ENCODE measurements at regions of chr20 and their contacts with region 1.

Region 1: DNA sequence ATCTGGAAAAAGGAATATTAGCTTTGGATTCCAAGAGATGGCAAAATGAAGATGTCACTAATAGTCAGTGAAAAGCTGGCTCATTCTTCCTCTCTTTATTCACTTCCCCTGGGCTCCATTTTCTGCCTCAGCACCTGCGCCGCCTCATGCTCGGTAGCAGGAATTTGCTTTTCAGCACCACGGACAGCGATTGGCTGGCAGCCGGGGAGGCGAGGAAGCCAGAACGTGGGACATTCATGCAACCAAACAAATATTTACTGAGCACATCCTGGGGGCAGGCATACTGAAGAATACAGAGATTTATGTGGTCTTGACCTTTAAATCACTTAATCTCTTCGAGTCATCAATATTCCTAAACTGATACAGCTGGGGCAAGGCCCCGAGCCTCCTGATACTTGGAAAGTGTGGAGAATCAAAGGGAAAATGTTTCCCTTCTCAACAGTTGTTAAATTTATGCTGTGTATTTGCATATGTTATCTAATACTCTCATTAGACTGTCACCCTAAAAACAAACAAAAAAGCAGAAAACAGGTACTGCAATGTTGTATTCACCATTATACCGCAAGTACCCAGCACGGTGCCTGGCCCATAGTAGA is 12.1 kb upstream of the PDYN start:
- DNase-seq: peak; percentile 74
- ATAC-seq: no peak
- H3K4me3 Mint-ChIP-seq: no peak overlapping the region
- H3K27ac Mint-ChIP-seq: no peak overlapping the region
- H3K4me1 Mint-ChIP-seq: no peaks in the 10 kb centered on the region
- H3K27me3 Mint-ChIP-seq: peaks cover 26% of the 10 kb centered on the region
- CTCF ChIP-seq: no peak

Region 2: GRCh38 chr20:1844325-1845162 is 161.4 kb before region 1 on chr20:
- CTCF ChIA-PET with region 1: no interaction called
- POLR2A ChIA-PET with region 1: no interaction called
- intact Hi-C with region 1: no loop called
- DNase-seq: peak; percentile 77
- ATAC-seq: peak; percentile 97
- H3K4me3 Mint-ChIP-seq: no peak overlapping the region
- H3K27ac Mint-ChIP-seq: peak overlapping the region; percentile 1
- H3K4me1 Mint-ChIP-seq: peaks cover 9% of the 10 kb centered on the region
- H3K27me3 Mint-ChIP-seq: peaks cover 4% of the 10 kb centered on the region
- CTCF ChIP-seq: no peak

Region 3: DNA sequence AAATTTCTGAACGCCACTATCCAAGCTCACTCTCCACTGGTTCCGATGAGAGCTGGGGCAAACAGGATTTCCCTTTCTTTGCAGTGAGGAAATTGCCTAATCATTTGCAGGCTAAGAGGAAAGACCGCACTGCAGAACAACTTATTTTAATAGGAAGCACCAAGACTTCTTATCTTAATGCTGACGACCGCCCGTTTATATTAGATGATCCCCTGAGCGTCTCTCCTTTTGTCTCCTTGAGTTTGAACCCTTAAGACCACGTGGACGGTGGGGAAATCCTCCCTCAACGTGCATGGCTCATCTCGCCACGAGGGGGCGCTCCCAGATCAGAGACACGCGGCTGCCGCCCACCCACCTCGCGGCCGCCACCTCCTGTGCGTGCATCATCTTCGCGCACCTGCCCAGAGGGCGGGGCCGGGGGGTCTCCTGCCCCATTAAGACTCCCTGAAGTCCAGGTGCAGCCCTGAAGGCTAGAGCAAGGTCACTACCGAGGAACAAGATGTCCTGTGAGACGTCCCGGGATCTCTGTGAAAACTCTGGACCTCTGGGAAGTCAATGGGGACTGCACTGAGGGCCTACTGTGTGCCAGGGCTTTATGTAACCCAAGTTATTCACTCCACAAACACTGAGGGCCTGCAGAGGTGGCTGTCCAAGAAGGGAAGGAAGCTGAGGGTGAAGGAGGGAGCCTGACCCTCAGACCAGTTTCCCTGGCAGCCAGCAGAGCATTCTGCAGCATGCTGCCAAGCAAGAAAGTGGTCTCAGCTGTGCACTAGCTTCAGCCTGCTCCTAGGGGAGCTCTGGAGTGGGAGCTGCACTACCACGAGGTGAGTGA is 40.2 kb before region 1 on chr20:
- CTCF ChIA-PET with region 1: interaction called, 15 read pairs
- POLR2A ChIA-PET with region 1: no interaction called
- intact Hi-C with region 1: no loop called
- DNase-seq: peak; percentile 91
- ATAC-seq: peak; percentile 92
- H3K4me3 Mint-ChIP-seq: peak overlapping the region; percentile 40
- H3K27ac Mint-ChIP-seq: peak overlapping the region; percentile 35
- H3K4me1 Mint-ChIP-seq: peaks cover 17% of the 10 kb centered on the region
- H3K27me3 Mint-ChIP-seq: peaks cover 32% of the 10 kb centered on the region
- CTCF ChIP-seq: peak; percentile 95

Region 4: GRCh38 chr20:2022163-2022562 is 16.2 kb after region 1 on chr20:
- CTCF ChIA-PET with region 1: interaction called, 14 read pairs
- POLR2A ChIA-PET with region 1: interaction called, 3 read pairs
- intact Hi-C with region 1: no loop called
- DNase-seq: no peak
- ATAC-seq: no peak
- H3K4me3 Mint-ChIP-seq: no peak overlapping the region
- H3K27ac Mint-ChIP-seq: no peak overlapping the region
- H3K4me1 Mint-ChIP-seq: no peaks in the 10 kb centered on the region
- H3K27me3 Mint-ChIP-seq: peaks cover 23% of the 10 kb centered on the region
- CTCF ChIP-seq: no peak

Region 5: DNA sequence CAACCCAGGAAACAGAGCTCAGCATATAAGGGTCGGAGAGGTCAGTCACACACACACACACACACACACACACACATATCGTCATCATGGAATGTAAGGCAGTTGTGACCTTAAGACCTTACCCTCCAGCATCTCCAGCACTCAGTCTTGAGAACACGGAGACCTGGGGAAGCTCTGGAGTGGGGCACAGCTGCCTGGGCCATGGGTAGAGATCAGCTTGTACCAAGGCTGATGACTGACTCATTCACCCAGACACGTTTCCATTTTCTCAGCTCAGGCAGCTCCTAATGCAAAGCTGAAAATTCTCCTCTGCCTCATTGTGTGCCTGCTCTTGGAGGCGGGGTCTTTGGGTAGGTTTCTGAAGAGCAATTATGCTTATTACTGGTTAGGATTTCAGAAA is 26.2 kb after region 1 on chr20:
- CTCF ChIA-PET with region 1: interaction called, 20 read pairs
- POLR2A ChIA-PET with region 1: no interaction called
- intact Hi-C with region 1: no loop called
- DNase-seq: no peak
- ATAC-seq: no peak
- H3K4me3 Mint-ChIP-seq: no peak overlapping the region
- H3K27ac Mint-ChIP-seq: no peak overlapping the region
- H3K4me1 Mint-ChIP-seq: no peaks in the 10 kb centered on the region
- H3K27me3 Mint-ChIP-seq: peaks cover 41% of the 10 kb centered on the region
- CTCF ChIP-seq: no peak

Region 6: GRCh38 chr20:2093159-2093781 is 87.3 kb after region 1 on chr20:
- CTCF ChIA-PET with region 1: interaction called, 20 read pairs
- POLR2A ChIA-PET with region 1: no interaction called
- intact Hi-C with region 1: no loop called
- DNase-seq: peak; percentile 63
- ATAC-seq: peak; percentile 56
- H3K4me3 Mint-ChIP-seq: no peak overlapping the region
- H3K27ac Mint-ChIP-seq: no peak overlapping the region
- H3K4me1 Mint-ChIP-seq: peaks cover 2% of the 10 kb centered on the region
- H3K27me3 Mint-ChIP-seq: peaks cover 28% of the 10 kb centered on the region
- CTCF ChIP-seq: peak; percentile 69

Region 7: GRCh38 chr20:2172305-2173175 is 166.6 kb after region 1 on chr20:
- CTCF ChIA-PET with region 1: interaction called, 56 read pairs
- POLR2A ChIA-PET with region 1: no interaction called
- intact Hi-C with region 1: loop called (anchors 5 kb)
- DNase-seq: peak; percentile 76
- ATAC-seq: peak; percentile 81
- H3K4me3 Mint-ChIP-seq: no peak overlapping the region
- H3K27ac Mint-ChIP-seq: no peak overlapping the region
- H3K4me1 Mint-ChIP-seq: peaks cover 2% of the 10 kb centered on the region
- H3K27me3 Mint-ChIP-seq: peaks cover 13% of the 10 kb centered on the region
- CTCF ChIP-seq: peak; percentile 90

Measured in activated CD8-positive, alpha-beta T cell treated with anti-CD3 and anti-CD28 coated beads for 36 hours (primary cell).